ENCODE measurements at regions of chr1 and their contacts with region 1.

Region 1: GRCh38 chr1:29011775-29012174 is 97.4 kb downstream of the EPB41 start:
- H3K4me3 Mint-ChIP-seq: no peak overlapping the region
- H3K27ac Mint-ChIP-seq: no peak overlapping the region
- H3K4me1 Mint-ChIP-seq: no peaks in the 10 kb centered on the region
- H3K27me3 Mint-ChIP-seq: no peaks in the 10 kb centered on the region

Region 2: GRCh38 chr1:28036431-28036830 is 975.3 kb before region 1 on chr1:
- intact Hi-C with region 1: no loop called
- H3K4me3 Mint-ChIP-seq: no peak overlapping the region
- H3K27ac Mint-ChIP-seq: peak overlapping the region; percentile 64
- H3K4me1 Mint-ChIP-seq: peaks cover 20% of the 10 kb centered on the region
- H3K27me3 Mint-ChIP-seq: no peaks in the 10 kb centered on the region

Region 3: DNA sequence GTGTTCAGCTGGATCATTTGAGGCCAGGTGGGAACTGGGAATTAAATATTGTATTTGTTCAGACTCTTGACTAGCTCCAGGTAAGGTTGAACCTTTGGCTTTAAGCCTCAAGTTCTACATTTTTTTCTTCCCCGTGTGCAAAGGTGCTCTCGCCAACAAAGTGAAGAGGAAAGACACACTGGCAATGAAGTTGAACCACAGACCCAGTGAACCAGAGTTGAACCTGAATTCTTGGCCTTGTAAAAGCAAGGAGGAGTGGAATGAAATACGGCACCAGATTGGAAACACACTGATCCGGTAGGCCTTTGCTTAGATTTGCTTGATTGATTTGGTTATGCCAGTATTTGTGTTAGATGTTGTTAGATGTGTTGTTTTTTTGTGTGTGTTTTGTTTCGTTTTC is 531.5 kb before region 1 on chr1:
- intact Hi-C with region 1: loop called (anchors 10 kb)
- H3K4me3 Mint-ChIP-seq: no peak overlapping the region
- H3K27ac Mint-ChIP-seq: no peak overlapping the region
- H3K4me1 Mint-ChIP-seq: no peaks in the 10 kb centered on the region
- H3K27me3 Mint-ChIP-seq: no peaks in the 10 kb centered on the region

Region 4: GRCh38 chr1:29156543-29157268 is 144.9 kb after region 1 on chr1:
- intact Hi-C with region 1: no loop called
- H3K4me3 Mint-ChIP-seq: no peak overlapping the region
- H3K27ac Mint-ChIP-seq: no peak overlapping the region
- H3K4me1 Mint-ChIP-seq: no peaks in the 10 kb centered on the region
- H3K27me3 Mint-ChIP-seq: no peaks in the 10 kb centered on the region

Measured in dendritic cell treated with granulocyte-macrophage colony-stimulating factor and Interleukin-4, amounts not matched to agents 40 ng/mL and 50 ng/mL, for 4 days (primary cell).